Pancreas (tissue), 10 donors: ENCODE measurements at regions of chr6 and their contacts with region 1.

Region 1: DNA sequence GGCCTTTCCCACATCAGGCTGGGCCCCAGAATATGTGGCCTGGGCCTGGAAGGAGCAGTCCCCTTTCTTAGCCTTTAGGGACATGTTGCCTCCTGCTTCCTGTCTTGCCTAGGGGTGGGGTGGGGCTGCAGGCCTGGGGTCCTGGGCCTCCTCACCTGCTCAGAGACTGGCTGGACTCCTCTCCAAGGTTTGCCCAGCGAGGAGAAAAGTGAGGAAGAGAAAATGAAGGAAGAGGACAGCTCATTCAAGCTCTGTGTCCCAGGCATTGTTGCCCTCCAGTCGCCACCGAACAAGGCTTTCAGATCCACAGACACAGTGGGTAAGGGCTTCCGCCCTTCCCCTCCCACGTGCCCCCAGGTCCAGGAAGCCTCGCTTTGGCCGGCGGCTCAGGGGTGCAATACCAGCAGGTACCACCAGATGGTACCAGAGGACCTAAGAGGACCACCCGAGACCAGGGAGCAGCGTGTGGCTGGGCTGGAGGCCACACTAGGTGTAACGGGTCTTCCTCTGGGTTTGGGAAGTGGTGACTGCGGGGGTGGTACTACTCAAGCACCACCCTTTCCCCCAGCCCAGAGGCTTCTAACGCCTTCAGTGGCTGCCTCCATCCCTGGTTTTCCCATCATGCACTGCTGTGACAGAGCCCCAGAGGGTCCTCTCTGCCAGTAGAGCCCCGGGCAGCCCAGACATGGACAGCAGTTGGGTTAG is 5.5 kb upstream of the BAK1 start:
- DNase-seq: peak; percentile 61 to 89 (median 80)
- ATAC-seq: peak in 3 of 4 donors; percentile 64 to 67 (median 67)
- H3K4me3 ChIP-seq: no peak overlapping the region
- H3K27ac ChIP-seq: no peak overlapping the region
- H3K4me1 ChIP-seq: peaks cover 6 to 11% (median 8%) of the 10 kb centered on the region in 3 donors
- H3K27me3 ChIP-seq: no peaks in the 10 kb centered on the region
- CTCF ChIP-seq: peak; percentile 91 to 97 (median 94)

Region 2: DNA sequence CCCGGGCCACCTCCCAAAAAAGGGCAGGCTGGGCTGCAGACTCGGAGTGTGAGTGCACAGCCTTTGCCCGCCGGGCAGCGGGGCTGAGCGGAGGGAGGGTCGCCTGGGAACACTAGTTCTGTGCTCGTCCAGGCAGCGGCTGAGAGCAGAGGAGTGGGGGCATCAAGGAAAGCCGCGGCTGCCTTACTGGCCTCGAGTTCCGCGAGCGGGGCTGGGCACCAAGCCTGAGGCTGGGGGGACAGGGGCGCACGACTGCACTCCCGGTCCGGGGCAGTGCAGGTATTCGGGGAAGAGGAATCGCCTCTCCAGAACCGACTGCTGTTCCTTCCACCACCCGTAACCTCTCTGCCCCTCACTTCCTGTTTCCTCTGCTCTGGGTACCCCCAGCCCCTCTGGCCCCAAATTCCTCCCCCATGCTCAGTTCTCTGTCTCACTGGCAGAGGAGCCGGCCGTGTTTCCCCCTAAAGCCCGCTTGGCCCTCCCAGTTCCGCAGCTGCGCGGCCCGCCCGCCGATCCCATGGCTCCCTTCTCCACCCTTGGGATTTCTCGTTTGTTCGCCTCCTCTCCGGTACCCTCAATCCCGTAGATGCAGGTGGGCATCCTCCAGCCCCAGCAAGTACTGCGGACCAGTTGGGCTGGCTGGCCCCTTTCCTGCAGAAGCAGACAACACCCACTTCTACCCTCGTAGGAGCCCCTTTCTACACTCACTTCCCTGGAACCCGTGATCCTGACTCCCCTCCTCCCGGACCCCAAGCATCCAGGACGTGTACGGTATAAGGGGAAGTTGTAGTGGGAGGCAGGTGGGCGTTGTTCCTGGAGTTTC is 372.2 kb before region 1 on chr6:
- intact Hi-C with region 1: no loop called
- DNase-seq: peak in 5 of 6 donors; percentile 26 to 80 (median 48)
- ATAC-seq: peak; percentile 30 to 64 (median 42)
- H3K4me3 ChIP-seq: peak overlapping the region; percentile 23 to 55 (median 26)
- H3K27ac ChIP-seq: no peak overlapping the region
- H3K4me1 ChIP-seq: peaks cover 0 to 5% (median 5%) of the 10 kb centered on the region in 3 donors
- H3K27me3 ChIP-seq: no peaks in the 10 kb centered on the region
- CTCF ChIP-seq: no peak

Region 3: GRCh38 chr6:33513213-33513612 is 72.3 kb before region 1 on chr6:
- intact Hi-C with region 1: no loop called
- DNase-seq: no peak
- ATAC-seq: no peak
- H3K4me3 ChIP-seq: no peak overlapping the region
- H3K27ac ChIP-seq: no peak overlapping the region
- H3K4me1 ChIP-seq: no peaks in the 10 kb centered on the region
- H3K27me3 ChIP-seq: no peaks in the 10 kb centered on the region
- CTCF ChIP-seq: no peak

Region 4: DNA sequence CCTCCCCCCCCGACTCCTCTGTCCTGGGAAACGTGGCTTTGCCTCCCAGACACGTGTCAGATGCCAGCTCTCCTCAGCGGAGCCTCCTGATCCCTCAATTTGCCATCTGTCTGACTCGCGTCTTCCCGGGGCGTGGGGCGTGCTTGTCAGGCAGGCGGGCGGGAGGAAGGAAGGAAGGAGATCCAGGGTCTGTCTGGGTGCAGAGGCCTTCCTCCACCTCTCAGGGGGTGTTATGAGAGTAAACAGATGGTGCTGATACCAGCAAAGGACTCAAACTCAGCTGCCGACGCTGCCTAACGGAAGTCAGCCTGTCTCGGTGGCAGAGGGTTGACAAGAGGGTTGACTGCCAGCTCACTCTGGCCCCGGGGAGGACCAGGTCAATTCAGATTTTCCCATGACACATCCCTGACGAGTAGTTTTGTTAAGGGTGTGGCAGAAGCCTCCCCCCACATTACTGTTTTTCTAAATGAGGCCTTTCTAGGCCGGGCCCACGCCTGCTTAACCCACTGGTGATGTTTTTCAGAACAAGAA is 108.9 kb after region 1 on chr6:
- intact Hi-C with region 1: loop called in 1 of 3 experiments (anchors 5 kb)
- DNase-seq: peak in 1 of 6 donors; percentile 41
- ATAC-seq: peak in 3 of 4 donors; percentile 12 to 41 (median 28)
- H3K4me3 ChIP-seq: no peak overlapping the region
- H3K27ac ChIP-seq: peak overlapping the region in 1 of 4 donors; percentile 22
- H3K4me1 ChIP-seq: no peaks in the 10 kb centered on the region
- H3K27me3 ChIP-seq: no peaks in the 10 kb centered on the region
- CTCF ChIP-seq: no peak

Region 5: GRCh38 chr6:33700391-33701050 is 115.0 kb after region 1 on chr6:
- intact Hi-C with region 1: loop called in 1 of 3 experiments (anchors 5 kb)
- DNase-seq: peak in 5 of 6 donors; percentile 31 to 77 (median 63)
- ATAC-seq: peak in 3 of 4 donors; percentile 75 to 84 (median 76)
- H3K4me3 ChIP-seq: no peak overlapping the region
- H3K27ac ChIP-seq: no peak overlapping the region
- H3K4me1 ChIP-seq: no peaks in the 10 kb centered on the region
- H3K27me3 ChIP-seq: no peaks in the 10 kb centered on the region
- CTCF ChIP-seq: peak; percentile 19 to 46 (median 30)